Mammary epithelial cell (primary cell): ENCODE measurements at regions of chr2 and their contacts with region 1.

Region 1: GRCh38 chr2:172465417-172466334 is 38.3 kb downstream of the ITGA6 start:
- DNase-seq: peak; percentile 76
- H3K4me3 ChIP-seq: no peak overlapping the region
- H3K27ac ChIP-seq: peak overlapping the region; percentile 85
- H3K4me1 ChIP-seq: peaks cover 54% of the 10 kb centered on the region
- H3K27me3 ChIP-seq: no peaks in the 10 kb centered on the region
- CTCF ChIP-seq: peak; percentile 84 to 95

Region 2: GRCh38 chr2:171811245-171811628 is 654.4 kb before region 1 on chr2:
- CTCF ChIA-PET with region 1: no interaction called
- dilution Hi-C with region 1: no loop called
- in situ Hi-C with region 1: no loop called
- intact Hi-C with region 1: loop called (anchors 5 kb)
- DNase-seq: peak; percentile 20
- H3K4me3 ChIP-seq: no peak overlapping the region
- H3K27ac ChIP-seq: no peak overlapping the region
- H3K4me1 ChIP-seq: peaks cover 15% of the 10 kb centered on the region
- H3K27me3 ChIP-seq: no peaks in the 10 kb centered on the region
- CTCF ChIP-seq: peak; percentile 32 to 46

Region 3: GRCh38 chr2:172179045-172179701 is 286.5 kb before region 1 on chr2:
- CTCF ChIA-PET with region 1: no interaction called
- dilution Hi-C with region 1: no loop called
- in situ Hi-C with region 1: loop called in 1 of 2 experiments (anchors 5 kb)
- intact Hi-C with region 1: no loop called
- DNase-seq: peak; percentile 98
- H3K4me3 ChIP-seq: no peak overlapping the region
- H3K27ac ChIP-seq: peak overlapping the region; percentile 11
- H3K4me1 ChIP-seq: peaks cover 33% of the 10 kb centered on the region
- H3K27me3 ChIP-seq: no peaks in the 10 kb centered on the region
- CTCF ChIP-seq: no peak

Region 4: GRCh38 chr2:172234716-172235691 is 230.7 kb before region 1 on chr2:
- CTCF ChIA-PET with region 1: no interaction called
- dilution Hi-C with region 1: no loop called
- in situ Hi-C with region 1: no loop called
- intact Hi-C with region 1: loop called (anchors 1 kb)
- DNase-seq: no peak
- H3K4me3 ChIP-seq: peak overlapping the region; percentile 3 to 23 (median 16)
- H3K27ac ChIP-seq: no peak overlapping the region
- H3K4me1 ChIP-seq: peaks cover 49% of the 10 kb centered on the region
- H3K27me3 ChIP-seq: no peaks in the 10 kb centered on the region
- CTCF ChIP-seq: no peak

Region 5: DNA sequence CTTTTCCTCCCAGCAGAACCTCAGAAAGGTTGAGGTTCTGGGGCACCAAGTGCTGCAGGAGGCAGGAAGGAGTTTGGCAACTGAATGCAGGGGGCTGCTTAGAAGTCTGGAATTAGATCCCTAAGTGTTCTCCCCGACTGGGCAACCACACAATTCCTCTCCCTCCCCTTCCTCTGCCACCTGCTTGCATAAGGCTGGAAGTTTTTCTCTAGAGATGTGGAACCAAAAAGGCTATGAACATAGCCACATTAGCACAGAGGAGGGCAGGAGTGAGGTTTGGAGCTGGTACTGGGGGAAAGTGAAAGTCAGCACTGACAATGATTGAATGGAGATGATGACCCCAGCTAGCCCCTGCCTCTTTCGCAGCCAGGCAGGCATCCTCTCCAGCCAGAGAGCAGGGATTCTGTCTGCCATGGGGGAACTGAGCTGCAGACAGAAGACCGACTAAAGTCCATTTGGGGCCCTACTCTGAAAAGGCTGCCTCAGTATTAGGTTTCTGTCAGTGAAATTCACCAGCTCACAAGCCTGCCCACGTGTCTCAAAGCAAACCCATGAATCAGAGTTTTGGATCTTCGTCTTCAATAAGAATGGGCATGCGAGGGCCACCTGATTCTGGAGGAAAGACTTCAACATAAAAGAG is 126.2 kb before region 1 on chr2:
- CTCF ChIA-PET with region 1: interaction called, 3 read pairs
- dilution Hi-C with region 1: no loop called
- in situ Hi-C with region 1: no loop called
- intact Hi-C with region 1: loop called (anchors 5 kb)
- DNase-seq: peak; percentile 33
- H3K4me3 ChIP-seq: no peak overlapping the region
- H3K27ac ChIP-seq: no peak overlapping the region
- H3K4me1 ChIP-seq: peaks cover 4% of the 10 kb centered on the region
- H3K27me3 ChIP-seq: no peaks in the 10 kb centered on the region
- CTCF ChIP-seq: peak in 1 of 2 donors; percentile 15

Region 6: GRCh38 chr2:172442072-172442895 is 23.4 kb before region 1 on chr2:
- CTCF ChIA-PET with region 1: interaction called, 6 read pairs
- dilution Hi-C with region 1: no loop called
- in situ Hi-C with region 1: no loop called
- intact Hi-C with region 1: loop called (anchors 1 kb)
- DNase-seq: peak; percentile 100
- H3K4me3 ChIP-seq: peak overlapping the region in 1 of 3 experiments; percentile 19
- H3K27ac ChIP-seq: peak overlapping the region; percentile 99
- H3K4me1 ChIP-seq: peaks cover 79% of the 10 kb centered on the region
- H3K27me3 ChIP-seq: no peaks in the 10 kb centered on the region
- CTCF ChIP-seq: no peak